ENCODE measurements at regions of chr12 and their contacts with region 1.

Region 1: DNA sequence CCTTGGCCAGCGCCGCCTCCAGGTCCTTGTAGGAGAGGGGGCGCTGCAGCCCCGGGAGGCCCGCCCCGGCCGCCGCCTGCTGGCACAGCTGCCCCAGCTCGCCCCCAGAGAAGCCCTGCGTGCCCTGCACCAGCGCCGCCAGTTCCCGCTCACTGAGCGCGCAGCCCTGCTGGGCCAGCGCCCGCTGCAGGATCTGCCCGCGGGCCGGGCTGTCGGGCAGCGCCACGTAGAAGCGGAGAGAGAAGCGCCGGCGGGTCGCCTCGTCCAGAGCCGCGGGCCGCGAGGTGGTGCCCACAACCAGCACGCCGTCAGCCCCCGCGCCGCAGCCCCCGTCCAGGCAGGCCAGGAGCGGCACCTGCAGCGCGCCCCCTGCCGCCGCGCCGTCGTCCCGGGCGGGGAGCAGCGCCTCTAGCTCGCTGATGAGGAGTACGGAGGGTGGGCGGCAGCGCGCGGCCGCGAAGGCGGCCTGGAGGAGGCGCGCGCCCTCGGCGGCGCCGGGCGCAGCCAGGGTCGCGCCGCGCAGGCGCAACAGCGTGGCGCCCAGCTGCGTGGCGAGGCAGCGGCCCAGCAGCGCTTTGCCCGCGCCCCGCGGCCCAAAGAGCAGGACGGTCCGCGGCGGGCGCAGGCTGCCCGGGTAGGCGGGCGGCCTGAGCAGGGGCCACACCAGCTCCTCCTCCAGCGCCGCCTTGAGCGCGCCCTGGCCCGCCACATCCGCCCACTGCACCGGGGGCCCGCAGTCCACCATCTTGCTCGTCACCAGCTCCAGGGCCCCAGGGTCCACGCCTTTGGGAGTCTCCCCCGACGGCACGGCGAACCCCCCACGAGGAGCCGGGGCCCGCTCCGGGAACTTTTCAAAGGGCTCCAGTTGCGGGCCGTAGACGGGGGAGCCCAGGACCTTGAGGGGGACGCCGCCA is 27.7 kb downstream of the FIGNL2 start:
- DNase-seq: peak; percentile 79 to 91 (median 84)
- ATAC-seq: peak; percentile 81 to 83
- H3K4me3 Mint-ChIP-seq: peak overlapping the region; percentile 63 to 84 (median 72)
- H3K27ac Mint-ChIP-seq: peak overlapping the region in 4 of 10 donors; percentile 21 to 85 (median 48)
- H3K4me1 Mint-ChIP-seq: peaks cover 7 to 33% (median 28%) of the 10 kb centered on the region in 4 donors
- H3K27me3 Mint-ChIP-seq: peaks cover 0 to 6% (median 0%) of the 10 kb centered on the region in 5 donors

Region 2: DNA sequence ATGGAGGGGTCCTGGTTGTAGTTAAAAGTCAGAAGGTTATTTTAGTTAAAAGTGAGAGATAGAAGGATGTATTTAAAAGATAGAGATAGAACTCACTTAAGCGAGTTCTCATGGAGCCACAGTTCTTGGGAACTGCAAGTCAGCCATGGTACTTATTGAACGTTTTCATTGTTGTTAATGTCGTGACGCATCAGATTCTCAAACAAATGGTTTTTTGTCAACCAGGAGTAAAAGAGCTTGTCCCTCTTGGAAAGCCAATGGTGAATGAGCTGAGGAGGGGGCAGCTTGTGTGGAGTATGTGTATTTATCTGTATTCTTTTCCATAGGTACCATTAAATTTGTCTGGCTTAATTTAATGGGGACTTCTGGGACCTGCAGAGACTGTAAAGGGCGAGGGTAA is 40.9 kb before region 1 on chr12:
- POLR2A ChIA-PET with region 1: interaction called, 17 read pairs
- DNase-seq: no peak
- ATAC-seq: no peak
- H3K4me3 Mint-ChIP-seq: peak overlapping the region in 9 of 10 donors; percentile 47 to 83 (median 66)
- H3K27ac Mint-ChIP-seq: peak overlapping the region in 8 of 10 donors; percentile 10 to 89 (median 74)
- H3K4me1 Mint-ChIP-seq: peaks cover 14 to 43% (median 27%) of the 10 kb centered on the region in 4 donors
- H3K27me3 Mint-ChIP-seq: no peaks in the 10 kb centered on the region

Region 3: DNA sequence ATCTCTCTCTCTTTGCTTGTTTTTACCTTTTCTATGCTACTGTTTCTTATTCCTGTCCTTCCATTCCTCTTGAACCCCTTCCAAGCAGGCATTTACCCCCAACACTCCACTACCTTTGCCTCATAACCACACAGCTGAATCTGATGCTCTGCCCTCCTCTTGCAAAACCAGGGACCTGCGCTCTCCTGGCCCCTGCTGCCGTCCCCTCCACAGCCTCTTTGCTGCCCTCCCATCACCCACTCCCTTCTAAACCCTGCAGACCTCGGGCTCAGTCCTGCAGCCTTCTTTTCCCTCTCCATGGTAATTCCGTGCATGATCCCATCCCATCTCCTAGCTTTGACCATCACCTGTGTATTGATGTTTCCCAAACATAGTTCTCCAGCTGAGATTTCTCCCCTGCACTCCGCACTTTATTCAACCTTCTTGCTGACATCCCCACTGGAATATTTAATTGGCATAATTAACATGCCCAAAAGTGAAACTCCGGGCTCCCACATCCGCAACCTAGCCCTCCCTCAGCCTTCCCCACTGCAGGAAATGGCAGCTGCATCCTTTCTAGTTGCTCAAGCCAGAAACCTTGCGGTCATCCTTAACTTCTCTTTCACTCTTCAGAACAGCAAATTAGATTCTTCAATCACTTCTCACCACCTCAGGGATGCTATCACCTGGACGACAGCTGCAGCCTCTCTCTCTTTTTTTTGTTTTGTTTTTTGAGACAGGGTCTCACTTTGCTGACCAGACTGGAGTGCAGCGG is 11.7 kb after region 1 on chr12:
- POLR2A ChIA-PET with region 1: interaction called, 14 read pairs
- DNase-seq: peak in 1 of 10 donors; percentile 20
- ATAC-seq: peak in 1 of 2 donors; percentile 33
- H3K4me3 Mint-ChIP-seq: peak overlapping the region; percentile 7 to 78 (median 60)
- H3K27ac Mint-ChIP-seq: peak overlapping the region in 1 of 10 donors; percentile 50
- H3K4me1 Mint-ChIP-seq: peaks cover 29 to 34% (median 32%) of the 10 kb centered on the region in 4 donors
- H3K27me3 Mint-ChIP-seq: peaks cover 15 to 51% (median 28%) of the 10 kb centered on the region in 5 donors

Region 4: GRCh38 chr12:51886021-51886322 is 65.2 kb after region 1 on chr12:
- POLR2A ChIA-PET with region 1: interaction called, 17 read pairs
- DNase-seq: peak in 9 of 10 donors; percentile 27 to 73 (median 44)
- ATAC-seq: peak; percentile 99
- H3K4me3 Mint-ChIP-seq: peak overlapping the region; percentile 54 to 77 (median 66)
- H3K27ac Mint-ChIP-seq: peak overlapping the region; percentile 83 to 98 (median 96)
- H3K4me1 Mint-ChIP-seq: peaks cover 7 to 19% (median 15%) of the 10 kb centered on the region in 4 donors
- H3K27me3 Mint-ChIP-seq: peaks cover 0 to 3% (median 0%) of the 10 kb centered on the region in 5 donors

Measured in naive thymus-derived CD8-positive, alpha-beta T cell (primary cell).